ENCODE measurements at regions of chr14 and their contacts with region 1.

Region 1: DNA sequence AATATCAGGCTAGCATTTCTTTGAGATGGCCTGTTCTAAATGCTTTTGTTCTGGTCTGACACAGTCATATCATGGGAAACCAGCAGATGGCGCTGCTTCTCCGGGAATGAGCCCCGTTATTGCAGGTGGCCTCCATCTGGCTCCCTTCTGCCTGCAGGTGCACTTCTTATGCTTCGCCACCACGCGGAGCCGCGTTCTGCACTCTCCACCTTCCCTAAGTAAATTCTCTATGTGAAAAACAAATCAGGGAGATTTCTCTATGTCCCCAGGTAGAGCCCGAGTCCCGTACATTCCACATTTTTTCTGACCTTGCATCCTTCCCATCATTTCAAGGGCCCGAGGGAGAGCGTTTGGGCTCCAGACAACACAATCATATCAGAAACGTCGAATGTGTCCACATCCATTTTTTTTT is 26.2 kb downstream of the GLRX5 start:
- DNase-seq: peak; percentile 85 to 92 (median 90)
- H3K4me3 ChIP-seq: no peak overlapping the region
- H3K27ac ChIP-seq: no peak overlapping the region
- H3K4me1 ChIP-seq: no peaks in the 10 kb centered on the region
- H3K27me3 ChIP-seq: peaks cover 0 to 4% (median 0%) of the 10 kb centered on the region in 5 experiments

Region 2: DNA sequence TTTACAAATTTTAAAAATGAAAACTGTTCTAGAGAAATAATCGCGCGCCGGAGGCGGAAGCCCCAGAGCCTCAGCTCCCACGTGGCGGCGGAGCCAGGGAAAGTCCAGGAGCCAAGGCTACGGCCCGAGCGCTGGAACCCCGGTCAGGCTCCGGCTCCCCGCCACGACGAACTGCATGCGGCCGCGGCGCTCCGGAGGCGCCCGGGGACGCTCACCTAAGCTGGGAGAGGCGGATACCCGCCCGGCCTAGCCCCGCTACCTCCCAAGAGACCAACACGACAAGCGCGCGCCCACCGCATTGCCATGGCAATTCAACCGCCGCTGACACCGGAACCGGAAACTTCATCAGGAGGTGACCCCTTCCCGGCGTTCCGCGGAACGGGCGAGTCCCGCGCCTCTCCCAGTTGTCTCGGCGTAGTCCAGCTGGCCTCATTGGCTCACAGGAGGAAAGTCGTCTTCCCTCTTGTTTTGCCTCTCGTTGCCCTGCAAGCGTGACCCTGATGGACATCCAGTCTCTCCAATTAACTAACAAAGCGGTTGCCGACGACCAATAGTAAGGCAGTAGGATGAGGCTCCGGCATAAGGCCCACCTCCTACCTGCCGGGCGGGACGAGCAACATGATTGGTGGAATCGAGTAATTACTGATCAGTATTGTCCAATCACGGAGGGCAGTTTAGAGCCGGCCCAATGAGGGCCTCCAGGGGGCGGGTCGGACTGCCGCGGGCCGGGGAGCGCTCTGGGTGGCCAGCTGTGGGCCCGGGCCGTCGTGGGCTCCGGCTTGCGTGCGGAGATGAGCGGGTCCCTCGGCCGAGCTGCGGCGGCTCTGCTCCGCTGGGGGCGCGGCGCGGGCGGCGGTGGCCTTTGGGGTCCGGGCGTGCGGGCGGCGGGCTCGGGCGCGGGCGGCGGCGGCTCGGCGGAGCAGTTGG is 26.4 kb before region 1 on chr14 and contains the start of gene GLRX5:
- CTCF ChIA-PET with region 1: no interaction called
- POLR2A ChIA-PET with region 1: no interaction called
- DNase-seq: peak; percentile 100
- H3K4me3 ChIP-seq: peak within 1 kb of the TSS; percentile 75 to 90 (median 87)
- H3K27ac ChIP-seq: peak within 1 kb of the TSS; percentile 90 to 97
- H3K4me1 ChIP-seq: peaks cover 17 to 50% (median 33%) of the 10 kb centered on the region in 4 experiments
- H3K27me3 ChIP-seq: no peaks in the 10 kb centered on the region

Region 3: DNA sequence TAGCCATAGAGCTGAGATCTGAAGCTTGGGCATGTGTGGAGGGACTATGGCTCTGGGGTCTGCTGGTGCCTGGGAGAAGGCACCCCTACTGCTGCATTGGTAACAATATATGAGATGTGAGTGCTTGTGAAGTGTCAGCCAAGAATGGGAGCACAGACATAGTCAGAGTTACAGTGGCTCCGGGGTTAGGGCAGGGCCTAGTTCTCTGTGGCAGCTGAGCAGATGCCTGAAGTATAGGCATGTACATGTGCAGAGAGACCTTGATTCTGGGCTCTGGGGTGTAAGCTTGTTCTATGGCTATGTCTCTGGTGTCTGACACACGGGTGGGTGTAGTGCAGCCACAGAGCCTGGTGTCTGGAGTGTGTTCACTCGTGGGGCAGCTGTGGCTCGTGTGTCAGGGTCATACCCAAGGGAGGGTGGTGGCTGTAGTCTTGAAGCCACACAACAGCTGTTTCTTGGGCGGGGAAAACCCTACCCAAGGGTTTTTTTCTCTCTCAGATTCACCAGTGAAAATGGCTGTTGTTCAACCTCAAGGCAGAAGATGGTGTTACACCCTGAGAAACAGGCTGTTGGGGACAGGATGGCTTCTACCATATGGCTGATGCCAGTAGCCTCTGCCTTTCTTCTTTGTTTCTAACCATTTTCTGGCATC is 164.8 kb after region 1 on chr14:
- CTCF ChIA-PET with region 1: no interaction called
- POLR2A ChIA-PET with region 1: no interaction called
- DNase-seq: no peak
- H3K4me3 ChIP-seq: no peak overlapping the region
- H3K27ac ChIP-seq: no peak overlapping the region
- H3K4me1 ChIP-seq: no peaks in the 10 kb centered on the region
- H3K27me3 ChIP-seq: peaks cover 0 to 5% (median 0%) of the 10 kb centered on the region in 5 experiments

Region 4: GRCh38 chr14:95774265-95775160 is 213.5 kb after region 1 on chr14:
- CTCF ChIA-PET with region 1: interaction called, 39 read pairs
- POLR2A ChIA-PET with region 1: no interaction called
- DNase-seq: peak; percentile 35 to 62 (median 35)
- H3K4me3 ChIP-seq: no peak overlapping the region
- H3K27ac ChIP-seq: no peak overlapping the region
- H3K4me1 ChIP-seq: no peaks in the 10 kb centered on the region
- H3K27me3 ChIP-seq: peaks cover 0 to 9% (median 0%) of the 10 kb centered on the region in 5 experiments

Region 5: GRCh38 chr14:95993768-95994592 is 433.0 kb after region 1 on chr14:
- CTCF ChIA-PET with region 1: interaction called, 52 read pairs
- POLR2A ChIA-PET with region 1: no interaction called
- DNase-seq: peak; percentile 34 to 64 (median 55)
- H3K4me3 ChIP-seq: no peak overlapping the region
- H3K27ac ChIP-seq: no peak overlapping the region
- H3K4me1 ChIP-seq: no peaks in the 10 kb centered on the region
- H3K27me3 ChIP-seq: peaks cover 0 to 17% (median 14%) of the 10 kb centered on the region in 5 experiments